ENCODE measurements at regions of chr14 and their contacts with region 1.

Region 1: DNA sequence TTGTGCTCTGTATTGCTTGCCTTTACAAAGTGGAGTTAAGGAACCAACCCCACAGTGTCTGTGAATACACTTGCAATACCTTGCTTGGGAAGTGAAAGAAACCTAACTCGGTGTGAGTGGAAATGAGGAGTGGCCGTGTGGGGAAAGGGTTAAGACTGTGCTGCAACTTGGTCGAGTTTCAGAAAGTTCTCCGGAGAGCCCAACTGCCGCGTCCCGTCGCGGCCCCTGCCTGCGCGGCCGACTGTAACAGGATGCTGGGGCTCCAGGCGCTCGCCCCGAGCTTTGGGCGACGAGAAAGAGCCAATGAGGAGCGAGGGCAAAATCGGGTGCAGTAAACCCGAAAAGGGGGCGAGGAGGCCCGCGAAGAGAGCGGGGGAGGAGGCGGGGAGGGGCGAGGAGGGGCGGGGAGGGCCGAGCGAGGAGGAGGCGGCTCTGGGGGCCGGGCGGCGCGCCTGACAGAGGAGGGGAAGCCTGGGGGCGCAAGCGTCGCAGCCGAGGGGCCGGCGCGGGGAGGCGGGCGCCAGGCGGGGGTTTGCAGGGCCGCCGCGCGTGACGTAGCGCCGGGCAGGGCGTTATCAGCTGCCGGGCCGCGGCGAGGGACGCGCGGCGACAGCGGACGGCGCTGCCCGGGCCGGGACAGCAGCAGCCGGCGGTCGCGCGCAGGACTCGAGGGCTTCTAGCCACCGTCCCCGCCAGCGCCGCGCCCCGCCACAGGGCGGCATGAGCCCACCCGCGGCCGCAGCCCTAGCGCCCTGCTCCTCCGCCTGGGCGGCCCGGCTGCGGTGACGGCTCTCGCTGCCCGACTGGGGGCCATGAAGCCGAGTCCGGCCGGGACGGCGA is at the start of gene DACT1:
- DNase-seq: no peak
- H3K4me3 ChIP-seq: no peak within 1 kb of the TSS
- H3K27ac ChIP-seq: no peak within 1 kb of the TSS
- H3K4me1 ChIP-seq: no peaks in the 10 kb centered on the region
- CTCF ChIP-seq: no peak
- total RNA-seq, gene DACT1: not detected in 2 replicates

Region 2: GRCh38 chr14:58656671-58657411 is 19.2 kb after region 1 on chr14:
- CTCF ChIA-PET with region 1: interaction called, 10 read pairs
- POLR2A ChIA-PET with region 1: no interaction called
- intact Hi-C with region 1: no loop called
- DNase-seq: no peak
- H3K4me3 ChIP-seq: no peak overlapping the region
- H3K27ac ChIP-seq: no peak overlapping the region
- H3K4me1 ChIP-seq: no peaks in the 10 kb centered on the region
- CTCF ChIP-seq: no peak

Measured in OCI-LY7 (cell line).